IMR-90 (cell line): ENCODE measurements at regions of chr1 and their contacts with region 1.

Region 1: GRCh38 chr1:154324669-154325582 is at the start of gene ATP8B2:
- DNase-seq: peak; percentile 65
- ATAC-seq: peak; percentile 52
- H3K4me3 ChIP-seq: peak within 1 kb of the TSS; percentile 77
- H3K27ac ChIP-seq: peak within 1 kb of the TSS; percentile 88
- H3K4me1 ChIP-seq: peaks cover 22% of the 10 kb centered on the region
- H3K27me3 ChIP-seq: peaks cover 17% of the 10 kb centered on the region; the same call in 1 of the 2 replicates
- CTCF ChIP-seq: peak; percentile 86
- POLR2A ChIP-seq: no peak
- RAD21 ChIP-seq: peak; percentile 54
- total RNA-seq, gene ATP8B2: 91.0 and 91.9 TPM in 2 replicates

Region 2: DNA sequence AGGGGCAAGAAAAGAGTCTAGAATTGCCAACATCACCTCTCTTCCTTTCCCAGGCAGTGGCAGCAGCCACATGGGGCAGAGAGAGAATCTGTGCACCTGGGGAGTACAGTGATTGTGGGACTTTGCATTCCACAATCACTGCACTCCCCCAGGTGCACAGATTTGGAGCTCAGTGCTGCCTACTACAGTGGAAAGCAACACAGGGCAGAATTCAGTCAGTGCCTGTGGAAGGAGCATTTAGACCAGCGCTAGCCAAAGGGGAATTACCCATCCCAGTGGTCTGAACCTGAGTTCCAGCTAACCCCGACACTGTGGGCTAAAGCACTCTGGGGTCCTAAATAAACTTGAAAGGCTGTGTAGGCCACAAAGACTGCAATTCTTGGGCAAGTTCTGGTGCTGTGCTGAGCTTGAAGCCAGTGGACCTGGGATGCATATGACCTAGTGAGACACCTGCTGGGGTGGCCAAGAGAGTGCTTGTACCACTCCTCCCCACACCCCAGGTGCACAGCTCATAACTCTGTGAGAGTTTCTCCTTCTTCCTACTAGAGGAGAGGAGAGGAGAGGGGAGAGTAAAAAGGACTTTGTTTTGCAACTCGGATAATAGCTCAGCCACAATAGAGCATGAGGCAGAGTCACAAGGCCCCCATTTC is 220.4 kb before region 1 on chr1:
- CTCF ChIA-PET with region 1: no interaction called
- POLR2A ChIA-PET with region 1: no interaction called
- dilution Hi-C with region 1: no loop called
- in situ Hi-C with region 1: no loop called
- intact Hi-C with region 1: no loop called
- DNase-seq: no peak
- ATAC-seq: no peak
- H3K4me3 ChIP-seq: no peak overlapping the region
- H3K27ac ChIP-seq: no peak overlapping the region
- H3K4me1 ChIP-seq: no peaks in the 10 kb centered on the region
- H3K27me3 ChIP-seq: 0 out of 2 replicates have a peak, but pooled peaks cover 1% of the 10 kb centered on the region
- CTCF ChIP-seq: no peak
- POLR2A ChIP-seq: no peak
- RAD21 ChIP-seq: no peak

Region 3: DNA sequence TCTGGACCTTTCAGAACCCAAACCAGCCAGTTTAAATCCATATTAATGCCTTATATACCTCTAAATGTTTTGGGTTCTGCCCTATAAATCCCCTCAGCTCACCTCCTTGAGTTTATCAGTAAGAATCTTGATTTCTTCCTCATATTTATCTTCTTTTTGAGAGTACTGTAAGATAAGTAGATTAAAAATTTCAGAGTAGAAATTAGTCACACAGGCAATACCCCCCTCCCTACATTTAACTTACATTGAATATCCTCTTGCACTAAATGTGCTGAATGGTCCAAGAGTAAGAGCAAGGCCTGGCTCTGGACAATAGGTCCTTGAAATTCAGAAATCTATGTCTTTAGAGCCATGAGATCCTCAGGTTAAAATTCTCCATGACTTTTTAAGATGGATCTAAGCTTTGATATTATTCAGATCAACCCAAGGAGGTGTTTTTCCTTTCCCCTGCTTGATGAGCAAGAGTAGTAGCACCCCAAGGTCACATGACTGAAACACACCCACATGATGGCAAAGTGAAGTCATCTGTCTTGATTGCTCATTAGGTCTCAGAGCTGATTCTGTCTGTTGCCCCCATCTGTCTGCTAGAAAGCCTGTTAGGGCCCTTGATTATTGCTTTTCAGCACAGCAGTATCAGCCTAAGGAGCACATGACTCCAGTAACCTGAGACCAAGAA is 154.2 kb before region 1 on chr1:
- CTCF ChIA-PET with region 1: no interaction called
- POLR2A ChIA-PET with region 1: no interaction called
- dilution Hi-C with region 1: no loop called
- in situ Hi-C with region 1: no loop called
- intact Hi-C with region 1: no loop called
- DNase-seq: no peak
- ATAC-seq: no peak; the same call in 1 of the 2 replicates
- H3K4me3 ChIP-seq: no peak overlapping the region
- H3K27ac ChIP-seq: no peak overlapping the region
- H3K4me1 ChIP-seq: peaks cover 2% of the 10 kb centered on the region; the same call in 1 of the 2 replicates
- H3K27me3 ChIP-seq: no peaks in the 10 kb centered on the region
- CTCF ChIP-seq: no peak
- POLR2A ChIP-seq: no peak
- RAD21 ChIP-seq: no peak

Region 4: DNA sequence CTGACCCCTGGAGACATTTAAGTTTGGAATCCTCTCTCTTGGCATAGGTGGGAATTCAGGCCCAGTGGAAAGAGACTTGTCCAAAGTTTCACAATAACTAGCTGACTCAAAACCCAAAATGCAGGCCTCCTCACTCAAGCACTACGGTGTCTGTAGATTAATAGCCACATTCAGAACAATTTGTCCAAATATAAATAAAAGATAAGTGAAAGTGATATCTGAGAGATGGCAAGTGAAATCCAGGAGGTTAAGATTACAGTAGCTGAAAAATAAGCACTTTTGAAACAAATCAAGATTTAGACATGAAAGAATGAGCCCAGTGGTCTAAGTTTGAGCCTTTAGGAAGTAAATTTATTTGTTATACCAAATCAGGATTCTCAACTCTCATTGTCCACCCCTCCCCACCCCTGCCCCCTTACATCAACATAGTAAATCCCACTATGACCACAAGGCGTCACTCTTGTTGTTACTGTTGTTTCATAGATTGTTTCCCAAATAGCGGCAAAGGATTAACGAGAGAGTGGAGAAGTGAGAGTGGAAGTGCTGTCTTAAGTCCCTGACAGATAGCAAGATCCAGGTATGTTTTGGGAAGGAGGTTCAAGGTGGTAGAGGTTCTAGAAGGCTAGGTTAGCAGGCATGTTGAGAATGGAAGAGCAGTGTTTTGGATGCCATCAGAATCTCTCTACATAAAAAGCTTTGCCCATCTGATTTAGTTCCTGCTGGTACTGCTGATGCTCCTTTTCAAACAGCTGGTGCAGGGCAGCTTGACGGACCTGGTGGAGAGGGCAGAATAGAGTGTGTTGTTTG is 126.0 kb before region 1 on chr1:
- CTCF ChIA-PET with region 1: interaction called, 3 read pairs
- POLR2A ChIA-PET with region 1: no interaction called
- dilution Hi-C with region 1: no loop called
- in situ Hi-C with region 1: no loop called
- intact Hi-C with region 1: loop called (anchors 5 kb)
- DNase-seq: peak; percentile 69
- ATAC-seq: peak; percentile 91
- H3K4me3 ChIP-seq: peak overlapping the region; percentile 19; the same call in 1 of the 2 replicates
- H3K27ac ChIP-seq: no peak overlapping the region
- H3K4me1 ChIP-seq: no peaks in the 10 kb centered on the region; the same call in 1 of the 2 replicates
- H3K27me3 ChIP-seq: peaks cover 13% of the 10 kb centered on the region
- CTCF ChIP-seq: peak; percentile 64
- POLR2A ChIP-seq: no peak
- RAD21 ChIP-seq: peak; percentile 57

Region 5: GRCh38 chr1:154335025-154335714 is 10.2 kb after region 1 on chr1:
- CTCF ChIA-PET with region 1: interaction called, 23 read pairs
- POLR2A ChIA-PET with region 1: interaction called, 7 read pairs
- dilution Hi-C with region 1: no loop called
- in situ Hi-C with region 1: no loop called
- intact Hi-C with region 1: loop called (anchors 1 kb)
- DNase-seq: peak; percentile 82
- ATAC-seq: peak; percentile 83
- H3K4me3 ChIP-seq: no peak overlapping the region
- H3K27ac ChIP-seq: peak overlapping the region; percentile 86
- H3K4me1 ChIP-seq: peaks cover 10% of the 10 kb centered on the region
- H3K27me3 ChIP-seq: no peaks in the 10 kb centered on the region
- CTCF ChIP-seq: peak; percentile 86
- POLR2A ChIP-seq: no peak
- RAD21 ChIP-seq: peak; percentile 76

Region 6: GRCh38 chr1:154371436-154371835 is 46.5 kb after region 1 on chr1:
- CTCF ChIA-PET with region 1: no interaction called
- POLR2A ChIA-PET with region 1: no interaction called
- dilution Hi-C with region 1: no loop called
- in situ Hi-C with region 1: no loop called
- intact Hi-C with region 1: no loop called
- DNase-seq: no peak
- ATAC-seq: no peak
- H3K4me3 ChIP-seq: no peak overlapping the region
- H3K27ac ChIP-seq: no peak overlapping the region
- H3K4me1 ChIP-seq: no peaks in the 10 kb centered on the region
- H3K27me3 ChIP-seq: no peaks in the 10 kb centered on the region; the same call in 1 of the 2 replicates
- CTCF ChIP-seq: no peak
- POLR2A ChIP-seq: no peak
- RAD21 ChIP-seq: no peak

Region 7: DNA sequence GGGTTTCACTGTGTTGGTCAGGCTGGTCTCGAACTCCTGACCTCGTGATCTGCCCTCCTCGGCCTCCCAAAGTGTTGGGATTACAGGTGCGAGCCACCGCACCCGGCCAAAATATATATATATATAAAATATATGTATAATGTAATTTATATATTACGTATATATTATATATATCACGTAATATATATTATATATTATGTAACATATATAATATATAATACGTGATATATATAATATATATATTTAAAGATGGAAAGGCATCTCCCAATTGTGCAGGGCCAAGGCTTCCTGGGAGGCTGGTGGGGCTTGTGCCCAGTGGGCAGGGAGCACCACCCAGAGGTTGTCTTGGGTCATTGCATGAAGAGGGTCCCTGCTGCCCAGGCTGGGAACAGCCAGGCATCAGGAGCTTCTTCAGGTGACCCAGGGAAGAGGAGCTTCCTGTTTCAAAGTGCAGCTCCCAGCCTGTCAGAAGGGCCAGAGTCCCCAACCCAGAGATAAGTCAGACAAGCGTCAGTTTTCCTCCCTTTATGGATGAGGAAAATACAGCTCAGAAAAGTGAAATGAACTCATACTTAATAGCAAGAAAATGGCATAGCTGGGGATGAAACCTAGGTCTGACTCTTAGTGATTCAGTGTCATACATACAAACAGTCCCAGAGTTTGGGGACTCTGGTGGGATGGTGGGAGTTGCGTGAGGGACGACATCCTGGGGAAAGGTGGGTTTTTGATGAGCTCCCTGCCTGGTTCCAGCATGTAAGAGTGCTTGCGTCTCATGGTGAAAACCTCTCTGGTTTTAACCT is 221.5 kb after region 1 on chr1:
- CTCF ChIA-PET with region 1: interaction called, 4 read pairs
- POLR2A ChIA-PET with region 1: no interaction called
- dilution Hi-C with region 1: no loop called
- in situ Hi-C with region 1: no loop called
- intact Hi-C with region 1: loop called (anchors 2 kb)
- DNase-seq: peak; percentile 58
- ATAC-seq: peak; percentile 97
- H3K4me3 ChIP-seq: no peak overlapping the region
- H3K27ac ChIP-seq: no peak overlapping the region
- H3K4me1 ChIP-seq: no peaks in the 10 kb centered on the region
- H3K27me3 ChIP-seq: peaks cover 32% of the 10 kb centered on the region
- CTCF ChIP-seq: peak; percentile 79
- POLR2A ChIP-seq: no peak
- RAD21 ChIP-seq: peak; percentile 89

Region 8: GRCh38 chr1:154574716-154575115 is 249.8 kb after region 1 on chr1:
- CTCF ChIA-PET with region 1: no interaction called
- POLR2A ChIA-PET with region 1: no interaction called
- dilution Hi-C with region 1: no loop called
- in situ Hi-C with region 1: no loop called
- intact Hi-C with region 1: no loop called
- DNase-seq: peak; percentile 49
- ATAC-seq: peak; percentile 69
- H3K4me3 ChIP-seq: no peak overlapping the region
- H3K27ac ChIP-seq: no peak overlapping the region
- H3K4me1 ChIP-seq: peaks cover 4% of the 10 kb centered on the region; the same call in 1 of the 2 replicates
- H3K27me3 ChIP-seq: peaks cover 20% of the 10 kb centered on the region
- CTCF ChIP-seq: no peak
- POLR2A ChIP-seq: no peak
- RAD21 ChIP-seq: no peak